Activated naive CD4-positive, alpha-beta T cell treated with anti-CD3 and anti-CD28 coated beads for 36 hours (primary cell): ENCODE measurements at regions of chr2 and their contacts with region 1.

Region 1: DNA sequence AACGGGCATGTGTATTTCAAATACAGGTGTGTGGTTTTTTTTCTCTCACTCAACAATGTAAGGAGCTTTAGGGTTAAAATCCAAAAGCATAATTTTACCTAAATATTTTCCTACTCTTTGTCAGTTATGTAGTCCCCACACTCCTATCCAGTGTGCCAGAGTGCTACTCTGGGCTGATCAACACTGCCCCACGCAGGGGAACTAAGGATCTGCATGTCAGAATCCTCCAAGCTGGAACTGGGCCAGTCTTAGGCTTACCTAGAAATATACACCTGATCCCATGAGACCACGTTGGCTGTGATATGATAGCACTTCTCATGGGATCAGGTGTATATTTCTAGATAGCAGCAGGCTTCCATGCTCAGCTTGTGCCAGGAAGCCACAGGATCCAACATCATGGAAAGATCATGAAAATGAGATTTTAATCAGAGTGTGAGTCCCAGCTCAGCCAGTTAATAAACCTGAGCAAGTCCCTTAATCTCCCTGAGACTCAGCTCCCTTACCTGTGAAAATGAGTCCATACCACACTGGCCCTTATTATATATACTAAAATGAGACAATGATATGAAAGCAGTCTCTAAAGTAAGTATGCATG is 29.7 kb downstream of the CCDC141 start:
- DNase-seq: peak; percentile 82
- H3K4me3 Mint-ChIP-seq: no peak overlapping the region
- H3K27ac Mint-ChIP-seq: no peak overlapping the region
- H3K4me1 Mint-ChIP-seq: peaks cover 26% of the 10 kb centered on the region
- H3K27me3 Mint-ChIP-seq: no peaks in the 10 kb centered on the region

Region 2: GRCh38 chr2:178761759-178762371 is 258.4 kb before region 1 on chr2:
- CTCF ChIA-PET with region 1: interaction called, 7 read pairs
- intact Hi-C with region 1: loop called (anchors 1 kb)
- DNase-seq: peak; percentile 51
- H3K4me3 Mint-ChIP-seq: no peak overlapping the region
- H3K27ac Mint-ChIP-seq: no peak overlapping the region
- H3K4me1 Mint-ChIP-seq: no peaks in the 10 kb centered on the region
- H3K27me3 Mint-ChIP-seq: no peaks in the 10 kb centered on the region

Region 3: DNA sequence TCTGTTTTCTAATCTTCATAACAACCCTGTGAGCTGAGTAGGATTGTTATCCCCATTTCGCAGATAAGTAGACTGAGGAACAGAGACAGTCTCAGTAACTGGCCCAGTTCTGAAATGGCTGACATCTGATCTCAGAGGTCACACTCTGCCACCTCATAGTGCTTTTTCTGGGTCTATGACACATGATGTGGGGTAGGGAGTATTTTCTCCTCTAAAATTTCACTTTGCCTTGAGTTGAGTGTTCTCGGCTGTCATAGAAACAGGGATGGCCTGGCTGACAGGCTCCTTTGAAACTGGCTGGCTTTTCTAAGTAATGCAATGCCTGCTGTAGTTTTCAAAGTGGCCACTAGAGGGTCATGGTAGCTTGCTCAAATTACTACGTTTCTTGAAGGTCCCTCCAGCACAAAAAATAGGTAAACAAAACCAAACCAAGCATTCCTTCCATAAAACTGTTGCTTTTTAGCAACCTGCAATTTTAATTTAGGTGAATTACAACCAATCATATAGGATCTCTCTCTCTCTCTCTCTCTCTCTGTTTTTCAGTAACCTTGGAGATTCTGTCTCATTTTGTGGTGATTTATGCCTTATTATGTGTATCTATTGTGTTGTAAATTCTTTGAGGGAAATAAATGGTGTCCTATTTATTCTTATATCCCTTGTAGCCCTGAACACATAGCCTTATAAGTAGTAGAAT is 128.8 kb before region 1 on chr2:
- CTCF ChIA-PET with region 1: interaction called, 22 read pairs
- intact Hi-C with region 1: loop called (anchors 1 kb)
- DNase-seq: peak; percentile 82
- H3K4me3 Mint-ChIP-seq: no peak overlapping the region
- H3K27ac Mint-ChIP-seq: no peak overlapping the region
- H3K4me1 Mint-ChIP-seq: peaks cover 9% of the 10 kb centered on the region
- H3K27me3 Mint-ChIP-seq: no peaks in the 10 kb centered on the region

Region 4: GRCh38 chr2:178976351-178976750 is 43.9 kb before region 1 on chr2:
- CTCF ChIA-PET with region 1: interaction called, 10 read pairs
- intact Hi-C with region 1: loop called (anchors 2 kb)
- DNase-seq: no peak
- H3K4me3 Mint-ChIP-seq: no peak overlapping the region
- H3K27ac Mint-ChIP-seq: no peak overlapping the region
- H3K4me1 Mint-ChIP-seq: peaks cover 2% of the 10 kb centered on the region
- H3K27me3 Mint-ChIP-seq: no peaks in the 10 kb centered on the region

Region 5: GRCh38 chr2:179005976-179006375 is 14.3 kb before region 1 on chr2:
- CTCF ChIA-PET with region 1: interaction called, 10 read pairs
- intact Hi-C with region 1: no loop called
- DNase-seq: no peak
- H3K4me3 Mint-ChIP-seq: no peak overlapping the region
- H3K27ac Mint-ChIP-seq: peak overlapping the region; percentile 27
- H3K4me1 Mint-ChIP-seq: no peaks in the 10 kb centered on the region
- H3K27me3 Mint-ChIP-seq: no peaks in the 10 kb centered on the region